H1 (cell line): ENCODE measurements at regions of chr2 and their contacts with region 1.

Region 1: DNA sequence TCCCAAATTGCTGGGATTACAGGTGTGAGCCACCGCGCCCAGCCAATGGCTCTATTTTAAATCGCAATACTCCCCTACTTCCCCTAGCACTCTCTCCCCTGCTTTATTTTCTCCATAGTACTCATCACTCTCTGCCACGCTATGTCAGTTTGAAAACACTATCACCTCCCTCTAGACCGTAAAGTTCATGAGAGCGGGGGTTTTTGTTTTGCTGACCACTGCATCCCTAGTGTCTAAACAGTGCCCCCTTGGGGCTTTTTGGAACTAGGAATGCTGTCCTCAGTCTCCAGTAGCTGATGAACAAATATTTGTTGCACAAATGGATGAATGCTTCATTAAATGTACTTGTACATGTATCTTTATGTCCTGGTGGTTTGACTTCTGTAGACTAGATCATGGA is 44.1 kb downstream of the ATOH8 start:
- DNase-seq: no peak
- H3K4me3 ChIP-seq: no peak overlapping the region
- H3K27ac ChIP-seq: no peak overlapping the region
- H3K4me1 ChIP-seq: no peaks in the 10 kb centered on the region; a peak in 1 of 7 replicates
- H3K27me3 ChIP-seq: peaks cover 0 to 2% (median 0%) of the 10 kb centered on the region in 4 experiments; a peak in 2 of 7 replicates
- CTCF ChIP-seq: peak in 2 of 3 experiments; percentile 58 to 74; a peak in 3 of 4 replicates
- EP300 ChIP-seq: no peak
- POLR2A ChIP-seq: no peak
- RAD21 ChIP-seq: peak; percentile 71 to 82

Region 2: GRCh38 chr2:85765081-85765731 is 32.7 kb before region 1 on chr2:
- CTCF ChIA-PET with region 1: interaction called, 986 read pairs
- POLR2A ChIA-PET with region 1: interaction called, 4 read pairs
- DNase-seq: peak in 1 of 2 experiments; percentile 69
- H3K4me3 ChIP-seq: peak overlapping the region; percentile 16 to 55 (median 38); a peak in 6 of 8 replicates
- H3K27ac ChIP-seq: no peak overlapping the region
- H3K4me1 ChIP-seq: peaks cover 5 to 41% (median 30%) of the 10 kb centered on the region in 4 experiments
- H3K27me3 ChIP-seq: peaks cover 0 to 29% (median 22%) of the 10 kb centered on the region in 4 experiments; a peak in 6 of 7 replicates
- CTCF ChIP-seq: no peak
- EP300 ChIP-seq: no peak
- POLR2A ChIP-seq: no peak
- RAD21 ChIP-seq: no peak

Region 3: DNA sequence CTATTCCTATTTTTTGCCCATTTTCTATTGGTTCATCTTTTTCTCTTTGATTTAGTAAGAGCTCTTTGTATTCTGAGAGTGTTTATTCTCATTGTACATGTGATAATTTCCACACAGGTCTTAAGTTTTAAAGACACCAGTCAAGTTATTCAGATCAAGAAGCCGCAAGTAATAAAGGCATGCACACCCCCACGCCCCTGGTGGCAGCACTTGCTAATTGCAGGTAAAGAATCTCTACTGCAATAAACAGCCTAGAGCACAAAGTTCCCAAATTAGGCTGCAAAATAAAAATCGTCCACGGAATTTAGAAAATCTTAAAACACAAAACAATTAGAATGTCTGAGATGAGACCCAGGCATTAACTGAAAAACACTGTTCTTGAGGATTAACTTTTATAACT is 45.6 kb after region 1 on chr2:
- CTCF ChIA-PET with region 1: no interaction called
- POLR2A ChIA-PET with region 1: no interaction called
- DNase-seq: peak in 1 of 2 experiments; percentile 80
- H3K4me3 ChIP-seq: no peak overlapping the region
- H3K27ac ChIP-seq: no peak overlapping the region
- H3K4me1 ChIP-seq: no peaks in the 10 kb centered on the region
- H3K27me3 ChIP-seq: no peaks in the 10 kb centered on the region
- CTCF ChIP-seq: peak; percentile 47 to 70 (median 58)
- EP300 ChIP-seq: no peak
- POLR2A ChIP-seq: no peak
- RAD21 ChIP-seq: peak; percentile 16 to 33; a peak in 2 of 4 replicates